ENCODE measurements at regions of chr1 and their contacts with region 1.

Region 1: DNA sequence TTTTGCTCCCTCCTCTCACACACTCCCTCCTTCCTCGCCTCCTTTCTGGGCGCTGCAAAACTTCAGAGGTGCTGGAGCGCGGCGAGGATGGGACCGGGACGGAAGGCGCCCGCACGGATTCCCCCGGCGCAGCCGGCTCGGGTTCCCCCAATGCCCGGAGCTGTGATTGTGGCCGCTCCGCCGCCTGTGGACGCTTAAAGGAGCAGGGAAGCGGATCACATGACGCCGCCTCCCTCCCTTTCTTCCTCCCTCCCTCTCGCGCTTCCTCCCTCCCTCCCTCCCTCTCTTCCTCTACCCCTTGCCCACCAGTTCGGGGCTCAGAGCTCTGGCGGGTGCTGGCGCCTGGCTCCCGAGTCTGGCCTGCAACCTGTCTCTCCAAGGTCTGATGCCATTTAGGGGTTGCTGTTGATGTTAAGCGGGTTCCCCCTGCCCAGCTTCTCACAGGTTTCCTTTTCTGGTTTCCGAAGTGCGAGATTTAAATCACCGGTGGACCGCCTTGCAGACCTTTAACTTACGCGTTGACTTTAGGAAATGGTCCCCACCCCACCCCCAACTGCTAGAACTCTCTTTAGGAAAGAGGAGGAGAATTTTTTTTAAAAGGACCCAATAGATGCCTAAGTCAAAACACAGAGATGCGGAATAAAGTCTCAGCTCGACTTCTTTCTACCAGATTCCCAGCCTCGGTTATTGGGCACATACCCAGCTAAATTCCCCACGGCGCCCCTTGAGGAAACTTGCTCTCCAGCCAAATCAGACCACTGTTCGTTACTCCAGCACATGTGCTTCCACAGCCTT is at the start of gene WLS:
- DNase-seq: peak; percentile 92
- H3K4me3 ChIP-seq: peak within 1 kb of the TSS; percentile 71
- H3K27ac ChIP-seq: peak within 1 kb of the TSS; percentile 90
- H3K4me1 ChIP-seq: peaks cover 39% of the 10 kb centered on the region
- H3K27me3 ChIP-seq: no peaks in the 10 kb centered on the region
- CTCF ChIP-seq: no peak
- total RNA-seq, gene WLS: 144 and 149 TPM in 2 replicates

Region 2: DNA sequence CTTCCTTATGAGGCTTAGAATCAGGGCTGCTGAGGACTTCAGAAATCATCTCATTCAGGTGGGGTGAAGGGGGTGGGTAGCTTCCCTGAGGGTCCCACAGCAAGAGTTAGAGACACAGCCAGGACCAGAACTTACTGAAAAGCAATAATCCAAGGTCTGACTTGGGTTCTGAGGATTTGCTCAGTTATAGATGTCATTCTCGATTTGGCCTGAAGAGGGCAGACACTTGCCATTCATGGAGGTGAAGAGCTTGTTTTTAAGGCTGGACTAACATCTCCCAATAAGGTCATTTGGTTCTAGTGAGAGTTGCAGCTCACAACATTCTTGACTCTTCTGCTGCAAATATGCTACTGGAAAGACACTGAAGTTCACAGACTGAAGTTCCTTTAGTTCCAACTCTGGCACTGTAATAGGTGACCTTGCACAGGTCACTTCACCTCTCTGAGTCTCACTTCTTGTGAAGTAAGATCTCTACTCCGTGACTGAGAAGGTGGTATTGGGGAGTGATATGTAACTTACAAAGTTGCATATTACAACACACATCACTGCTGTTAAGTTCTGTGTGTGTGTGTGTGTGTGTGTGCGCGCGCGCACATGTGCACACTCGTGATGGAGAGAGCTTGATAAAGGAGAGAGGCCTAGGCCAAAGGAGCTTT is 112.3 kb before region 1 on chr1:
- CTCF ChIA-PET with region 1: interaction called, 5 read pairs
- POLR2A ChIA-PET with region 1: no interaction called
- intact Hi-C with region 1: loop called (anchors 2 kb)
- DNase-seq: peak; percentile 75
- H3K4me3 ChIP-seq: no peak overlapping the region
- H3K27ac ChIP-seq: no peak overlapping the region
- H3K4me1 ChIP-seq: peaks cover 3% of the 10 kb centered on the region
- H3K27me3 ChIP-seq: no peaks in the 10 kb centered on the region
- CTCF ChIP-seq: peak; percentile 78

Region 3: DNA sequence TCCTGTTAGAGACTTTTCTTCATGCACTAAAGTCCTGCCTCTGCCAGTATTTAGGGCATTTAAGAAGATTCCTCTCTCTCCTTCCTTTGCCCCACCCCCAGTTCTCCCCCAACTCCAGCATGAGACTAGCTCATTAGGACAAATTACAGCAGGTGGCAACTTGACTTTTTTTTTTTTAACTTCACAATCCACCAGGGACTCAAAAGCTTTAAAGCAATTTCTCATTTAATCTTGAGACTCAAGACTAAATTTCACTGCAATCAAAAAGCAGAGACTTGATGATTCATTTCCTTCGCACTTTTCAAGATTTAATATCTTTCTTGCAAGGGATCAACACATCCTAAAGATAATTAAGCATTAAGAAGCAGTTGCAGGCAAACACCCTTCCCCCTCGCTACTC is 75.1 kb before region 1 on chr1:
- CTCF ChIA-PET with region 1: interaction called, 4 read pairs
- POLR2A ChIA-PET with region 1: interaction called, 3 read pairs
- intact Hi-C with region 1: loop called (anchors 5 kb)
- DNase-seq: peak; percentile 89
- H3K4me3 ChIP-seq: no peak overlapping the region
- H3K27ac ChIP-seq: no peak overlapping the region
- H3K4me1 ChIP-seq: peaks cover 25% of the 10 kb centered on the region
- H3K27me3 ChIP-seq: no peaks in the 10 kb centered on the region
- CTCF ChIP-seq: no peak

Region 4: DNA sequence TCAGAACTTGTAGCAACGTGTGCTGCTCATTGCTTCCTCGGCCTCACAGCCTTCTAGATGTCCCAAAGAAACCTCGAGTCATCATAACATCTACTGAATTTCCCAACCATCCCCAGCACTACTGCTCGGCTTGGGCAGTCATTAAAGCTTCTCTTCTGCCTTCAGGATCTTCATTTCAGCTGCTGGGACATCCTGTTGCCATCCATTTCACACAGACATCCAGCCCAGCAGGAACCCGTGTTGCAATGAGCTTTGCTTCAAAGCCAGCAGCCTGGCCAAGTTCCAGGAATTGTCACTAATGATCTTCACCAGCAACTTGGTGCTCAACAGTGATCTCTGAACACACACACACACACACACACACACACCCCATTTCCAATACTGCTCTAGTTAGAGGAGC is 18.7 kb before region 1 on chr1:
- CTCF ChIA-PET with region 1: no interaction called
- POLR2A ChIA-PET with region 1: interaction called, 15 read pairs
- intact Hi-C with region 1: no loop called
- DNase-seq: peak; percentile 96
- H3K4me3 ChIP-seq: no peak overlapping the region
- H3K27ac ChIP-seq: peak overlapping the region; percentile 36
- H3K4me1 ChIP-seq: peaks cover 70% of the 10 kb centered on the region
- H3K27me3 ChIP-seq: no peaks in the 10 kb centered on the region
- CTCF ChIP-seq: no peak

Region 5: GRCh38 chr1:68372487-68372886 is 139.9 kb after region 1 on chr1:
- CTCF ChIA-PET with region 1: no interaction called
- POLR2A ChIA-PET with region 1: no interaction called
- intact Hi-C with region 1: no loop called
- DNase-seq: no peak
- H3K4me3 ChIP-seq: no peak overlapping the region
- H3K27ac ChIP-seq: no peak overlapping the region
- H3K4me1 ChIP-seq: no peaks in the 10 kb centered on the region
- H3K27me3 ChIP-seq: no peaks in the 10 kb centered on the region
- CTCF ChIP-seq: no peak